PC-9 (cell line): ENCODE measurements at regions of chr18 and their contacts with region 1.

Region 1: DNA sequence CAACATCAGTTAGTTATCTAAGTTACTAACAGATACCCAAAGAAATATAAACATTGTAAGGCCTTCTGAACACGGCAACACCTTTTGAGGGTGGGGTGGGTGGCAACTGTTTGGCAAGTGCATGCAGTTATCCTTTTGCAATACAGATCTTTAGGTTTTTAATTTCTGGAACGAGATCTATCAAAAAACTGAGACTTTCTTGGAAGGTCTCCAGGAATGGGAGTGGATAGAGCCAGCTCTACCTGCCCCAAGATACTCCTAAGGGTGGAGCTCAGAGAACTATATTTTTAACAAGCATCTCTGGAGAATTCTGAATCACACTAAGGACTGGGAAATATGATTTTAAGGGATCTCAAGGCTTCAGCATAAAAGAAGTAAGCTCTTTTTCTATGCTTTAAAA is 11.4 kb upstream of the GALNT1 start:
- DNase-seq: no peak
- H3K4me3 ChIP-seq: no peak overlapping the region
- H3K27ac ChIP-seq: no peak overlapping the region
- H3K4me1 ChIP-seq: no peaks in the 10 kb centered on the region
- H3K27me3 ChIP-seq: no peaks in the 10 kb centered on the region
- CTCF ChIP-seq: no peak

Region 2: GRCh38 chr18:34971313-34971712 is 598.9 kb before region 1 on chr18:
- CTCF ChIA-PET with region 1: no interaction called
- POLR2A ChIA-PET with region 1: no interaction called
- intact Hi-C with region 1: no loop called
- DNase-seq: peak in 1 of 2 experiments; percentile 36
- H3K4me3 ChIP-seq: no peak overlapping the region
- H3K27ac ChIP-seq: no peak overlapping the region
- H3K4me1 ChIP-seq: no peaks in the 10 kb centered on the region
- H3K27me3 ChIP-seq: no peaks in the 10 kb centered on the region
- CTCF ChIP-seq: no peak

Region 3: GRCh38 chr18:35582899-35583558 is 12.8 kb after region 1 on chr18:
- CTCF ChIA-PET with region 1: no interaction called
- POLR2A ChIA-PET with region 1: no interaction called
- intact Hi-C with region 1: no loop called
- DNase-seq: peak; percentile 9 to 61
- H3K4me3 ChIP-seq: peak overlapping the region; percentile 75
- H3K27ac ChIP-seq: peak overlapping the region; percentile 19; the same call in 1 of the 2 replicates
- H3K4me1 ChIP-seq: peaks cover 20% of the 10 kb centered on the region
- H3K27me3 ChIP-seq: no peaks in the 10 kb centered on the region
- CTCF ChIP-seq: no peak

Region 4: GRCh38 chr18:35682281-35682867 is 112.2 kb after region 1 on chr18:
- CTCF ChIA-PET with region 1: no interaction called
- POLR2A ChIA-PET with region 1: interaction called, 17 read pairs
- intact Hi-C with region 1: no loop called
- DNase-seq: no peak
- H3K4me3 ChIP-seq: no peak overlapping the region
- H3K27ac ChIP-seq: no peak overlapping the region
- H3K4me1 ChIP-seq: no peaks in the 10 kb centered on the region
- H3K27me3 ChIP-seq: no peaks in the 10 kb centered on the region
- CTCF ChIP-seq: no peak